Naive thymus-derived CD4-positive, alpha-beta T cell (primary cell): ENCODE measurements at regions of chr4 and their contacts with region 1.

Region 1: GRCh38 chr4:100093091-100093866 is 97.0 kb downstream of the DDIT4L start:
- DNase-seq: peak; percentile 42 to 96 (median 89)
- ATAC-seq: peak; percentile 99
- H3K4me3 ChIP-seq: no peak overlapping the region
- H3K4me3 Mint-ChIP-seq: peak overlapping the region in 4 of 10 donors; percentile 8 to 70 (median 48)
- H3K27ac ChIP-seq: peak overlapping the region; percentile 55
- H3K27ac Mint-ChIP-seq: peak overlapping the region; percentile 77 to 99 (median 95)
- H3K4me1 ChIP-seq: peaks cover 0 to 16% of the 10 kb centered on the region in 2 donors
- H3K4me1 Mint-ChIP-seq: peaks cover 9 to 48% (median 20%) of the 10 kb centered on the region in 7 donors
- H3K27me3 ChIP-seq: no peaks in the 10 kb centered on the region
- H3K27me3 Mint-ChIP-seq: no peaks in the 10 kb centered on the region

Region 2: GRCh38 chr4:98928505-98929340 is 1164.6 kb before region 1 on chr4 and contains the start of gene EIF4E:
- CTCF ChIA-PET with region 1: no interaction called
- POLR2A ChIA-PET with region 1: no interaction called
- intact Hi-C with region 1: loop called in 1 of 2 experiments (anchors 10 kb)
- DNase-seq: peak; percentile 81 to 99 (median 97)
- ATAC-seq: peak; percentile 88
- H3K4me3 ChIP-seq: peak within 1 kb of the TSS; percentile 96
- H3K4me3 Mint-ChIP-seq: peak within 1 kb of the TSS; percentile 91 to 100 (median 96)
- H3K27ac ChIP-seq: peak within 1 kb of the TSS; percentile 88
- H3K27ac Mint-ChIP-seq: peak within 1 kb of the TSS; percentile 88 to 98 (median 97)
- H3K4me1 ChIP-seq: peaks cover 9 to 15% of the 10 kb centered on the region in 2 donors
- H3K4me1 Mint-ChIP-seq: peaks cover 12 to 52% (median 38%) of the 10 kb centered on the region in 7 donors
- H3K27me3 ChIP-seq: no peaks in the 10 kb centered on the region
- H3K27me3 Mint-ChIP-seq: peaks cover 0 to 4% (median 0%) of the 10 kb centered on the region in 5 donors
- total RNA-seq, gene EIF4E: 53.6 to 96.1 (median 63.0) TPM

Region 3: GRCh38 chr4:99894161-99894997 is 198.9 kb before region 1 on chr4 and contains the start of gene LAMTOR3:
- CTCF ChIA-PET with region 1: no interaction called
- POLR2A ChIA-PET with region 1: no interaction called
- intact Hi-C with region 1: loop called in 1 of 2 experiments (anchors 10 kb)
- DNase-seq: peak; percentile 70 to 92 (median 89)
- ATAC-seq: peak; percentile 98
- H3K4me3 ChIP-seq: peak within 1 kb of the TSS; percentile 92
- H3K4me3 Mint-ChIP-seq: peak within 1 kb of the TSS; percentile 96 to 99 (median 98)
- H3K27ac ChIP-seq: peak within 1 kb of the TSS; percentile 96
- H3K27ac Mint-ChIP-seq: peak within 1 kb of the TSS; percentile 96 to 99 (median 98)
- H3K4me1 ChIP-seq: peaks cover 13 to 25% of the 10 kb centered on the region in 2 donors
- H3K4me1 Mint-ChIP-seq: peaks cover 25 to 55% (median 52%) of the 10 kb centered on the region in 7 donors
- H3K27me3 ChIP-seq: no peaks in the 10 kb centered on the region
- H3K27me3 Mint-ChIP-seq: no peaks in the 10 kb centered on the region
- total RNA-seq, gene LAMTOR3: 20.1 to 32.6 (median 27.4) TPM

Region 4: DNA sequence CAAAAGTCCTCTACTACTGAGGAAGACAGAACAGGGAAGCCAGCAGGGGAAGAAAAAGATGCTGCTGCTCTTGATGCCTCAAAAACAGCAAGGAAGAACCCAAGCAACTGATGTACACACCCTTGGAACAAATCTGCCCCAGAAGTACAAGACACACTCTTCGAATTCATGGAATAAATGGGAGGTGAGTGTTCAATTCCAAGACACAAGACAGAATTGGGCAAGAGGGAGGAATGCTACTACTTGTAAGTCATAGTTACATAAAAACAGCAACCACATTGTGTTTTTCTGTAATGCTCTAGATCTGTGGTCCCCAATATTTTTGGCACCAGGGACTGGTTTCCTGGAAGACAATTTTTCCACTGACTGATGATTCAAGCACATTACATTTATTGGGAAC is 85.2 kb before region 1 on chr4:
- CTCF ChIA-PET with region 1: no interaction called
- POLR2A ChIA-PET with region 1: no interaction called
- intact Hi-C with region 1: no loop called
- DNase-seq: no peak
- ATAC-seq: no peak
- H3K4me3 ChIP-seq: no peak overlapping the region
- H3K4me3 Mint-ChIP-seq: no peak overlapping the region
- H3K27ac ChIP-seq: no peak overlapping the region
- H3K27ac Mint-ChIP-seq: no peak overlapping the region
- H3K4me1 ChIP-seq: no peaks in the 10 kb centered on the region
- H3K4me1 Mint-ChIP-seq: no peaks in the 10 kb centered on the region
- H3K27me3 ChIP-seq: no peaks in the 10 kb centered on the region
- H3K27me3 Mint-ChIP-seq: peaks cover 0 to 7% (median 5%) of the 10 kb centered on the region in 5 donors

Region 5: DNA sequence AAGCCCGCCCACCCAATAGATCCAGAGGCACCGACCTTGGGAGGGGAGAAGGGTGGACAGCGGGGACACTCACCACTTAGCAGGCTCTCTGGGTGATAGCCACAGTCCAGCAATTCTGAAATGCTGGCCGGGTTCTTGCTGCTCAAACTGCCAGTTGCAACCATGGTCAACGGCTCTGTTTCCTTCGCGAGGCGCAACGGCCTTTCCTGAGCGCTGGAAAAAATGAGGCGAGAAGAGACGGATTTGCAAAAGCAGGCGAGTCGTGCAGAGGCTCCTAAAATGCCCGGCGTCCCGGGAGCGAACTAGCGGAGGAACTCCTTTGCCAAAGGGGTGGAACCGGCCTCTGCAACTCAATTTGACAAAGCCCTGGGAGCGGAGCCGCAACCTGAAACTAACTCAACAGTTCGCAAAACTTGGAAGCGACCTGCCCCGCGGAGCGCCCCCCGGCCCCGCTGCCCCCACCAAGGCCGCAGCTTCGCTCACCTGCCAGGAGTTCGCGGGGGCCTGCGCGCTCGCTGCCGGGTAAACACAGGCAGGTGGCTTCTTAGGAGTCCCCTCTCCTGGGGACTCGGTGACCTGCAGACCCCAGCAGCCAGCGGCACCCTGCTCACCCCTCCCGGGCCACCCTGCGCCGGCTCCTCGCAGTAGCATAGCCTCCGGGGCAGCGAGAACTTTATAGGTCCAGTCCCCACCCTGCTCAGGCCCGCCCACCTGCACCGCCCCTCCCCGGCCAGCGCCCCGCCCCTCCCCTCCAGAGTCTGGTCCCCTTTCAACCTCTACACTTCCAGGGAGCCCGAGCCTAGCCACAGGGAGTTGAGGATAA is 96.8 kb after region 1 on chr4 and contains the start of gene DDIT4L:
- CTCF ChIA-PET with region 1: no interaction called
- POLR2A ChIA-PET with region 1: no interaction called
- intact Hi-C with region 1: loop called in 1 of 2 experiments (anchors 5 kb)
- DNase-seq: no peak
- ATAC-seq: peak; percentile 61
- H3K4me3 ChIP-seq: peak within 1 kb of the TSS; percentile 48
- H3K4me3 Mint-ChIP-seq: peak within 1 kb of the TSS; percentile 74 to 86 (median 82)
- H3K27ac ChIP-seq: no peak within 1 kb of the TSS
- H3K27ac Mint-ChIP-seq: peak within 1 kb of the TSS in 1 of 9 donors; percentile 17
- H3K4me1 ChIP-seq: no peaks in the 10 kb centered on the region
- H3K4me1 Mint-ChIP-seq: peaks cover 14 to 19% (median 16%) of the 10 kb centered on the region in 7 donors
- H3K27me3 ChIP-seq: peaks cover 0 to 10% of the 10 kb centered on the region in 2 donors
- H3K27me3 Mint-ChIP-seq: peaks cover 51 to 68% (median 58%) of the 10 kb centered on the region in 5 donors
- total RNA-seq, gene DDIT4L: 1.2 TPM in 1 of 5 experiments, not detected in the others

Region 6: GRCh38 chr4:100581332-100581731 is 488.1 kb after region 1 on chr4:
- CTCF ChIA-PET with region 1: no interaction called
- POLR2A ChIA-PET with region 1: no interaction called
- intact Hi-C with region 1: no loop called
- DNase-seq: no peak
- ATAC-seq: no peak
- H3K4me3 ChIP-seq: no peak overlapping the region
- H3K4me3 Mint-ChIP-seq: no peak overlapping the region
- H3K27ac ChIP-seq: no peak overlapping the region
- H3K27ac Mint-ChIP-seq: no peak overlapping the region
- H3K4me1 ChIP-seq: no peaks in the 10 kb centered on the region
- H3K4me1 Mint-ChIP-seq: peaks cover 0 to 1% (median 0%) of the 10 kb centered on the region in 7 donors
- H3K27me3 ChIP-seq: no peaks in the 10 kb centered on the region
- H3K27me3 Mint-ChIP-seq: peaks cover 0 to 11% (median 6%) of the 10 kb centered on the region in 5 donors

Region 7: DNA sequence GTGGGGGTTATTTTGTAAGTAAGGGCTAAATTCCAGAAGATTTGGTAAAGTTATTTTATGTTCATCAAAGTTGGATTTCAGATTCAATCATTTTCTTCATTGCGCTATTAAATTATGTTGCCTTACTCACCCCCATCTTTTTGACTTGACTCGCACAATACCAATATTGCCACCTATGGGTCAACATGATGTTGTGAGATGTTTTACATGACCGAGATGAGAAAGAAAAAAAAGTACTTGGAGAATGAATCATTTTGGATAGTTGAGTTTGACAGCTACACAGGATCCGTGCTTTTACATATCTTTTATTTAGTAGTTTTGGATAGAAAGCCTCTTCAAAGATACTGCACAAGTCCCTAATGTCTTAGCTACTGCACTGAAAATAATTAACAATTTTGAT is 648.8 kb after region 1 on chr4:
- CTCF ChIA-PET with region 1: no interaction called
- POLR2A ChIA-PET with region 1: no interaction called
- intact Hi-C with region 1: loop called in 1 of 2 experiments (anchors 1 kb)
- DNase-seq: peak in 3 of 9 donors; percentile 2 to 4 (median 3)
- ATAC-seq: no peak
- H3K4me3 ChIP-seq: no peak overlapping the region
- H3K4me3 Mint-ChIP-seq: no peak overlapping the region
- H3K27ac ChIP-seq: no peak overlapping the region
- H3K27ac Mint-ChIP-seq: no peak overlapping the region
- H3K4me1 ChIP-seq: no peaks in the 10 kb centered on the region
- H3K4me1 Mint-ChIP-seq: peaks cover 0 to 1% (median 0%) of the 10 kb centered on the region in 7 donors
- H3K27me3 ChIP-seq: no peaks in the 10 kb centered on the region
- H3K27me3 Mint-ChIP-seq: peaks cover 0 to 7% (median 5%) of the 10 kb centered on the region in 5 donors

Region 8: DNA sequence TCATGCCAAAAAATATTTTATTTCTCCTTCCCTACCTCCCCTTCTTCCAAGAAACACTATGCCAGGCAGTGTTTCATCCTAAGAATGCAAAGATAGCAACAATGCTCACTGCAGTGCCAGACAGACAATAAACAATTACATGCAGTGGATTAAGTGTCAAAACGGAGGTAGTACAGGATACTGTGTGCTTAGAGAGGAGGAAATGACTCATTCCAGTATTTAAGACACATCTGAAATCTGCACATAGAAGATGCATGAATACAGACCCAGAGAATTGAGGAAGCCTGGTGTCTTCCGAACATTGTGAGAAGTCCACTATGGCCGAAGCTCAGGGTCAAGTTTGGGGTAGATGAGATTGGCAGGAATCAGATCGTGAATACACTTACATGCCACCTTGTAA is 927.7 kb after region 1 on chr4:
- CTCF ChIA-PET with region 1: interaction called, 3 read pairs
- POLR2A ChIA-PET with region 1: no interaction called
- intact Hi-C with region 1: loop called (anchors 5 kb)
- DNase-seq: peak in 3 of 9 donors; percentile 3 to 10 (median 10)
- ATAC-seq: peak; percentile 82
- H3K4me3 ChIP-seq: peak overlapping the region; percentile 21
- H3K4me3 Mint-ChIP-seq: peak overlapping the region in 4 of 10 donors; percentile 3 to 76 (median 46)
- H3K27ac ChIP-seq: no peak overlapping the region
- H3K27ac Mint-ChIP-seq: peak overlapping the region; percentile 8 to 90 (median 59)
- H3K4me1 ChIP-seq: peaks cover 0 to 48% of the 10 kb centered on the region in 2 donors
- H3K4me1 Mint-ChIP-seq: peaks cover 21 to 55% (median 34%) of the 10 kb centered on the region in 7 donors
- H3K27me3 ChIP-seq: no peaks in the 10 kb centered on the region
- H3K27me3 Mint-ChIP-seq: no peaks in the 10 kb centered on the region

Region 9: DNA sequence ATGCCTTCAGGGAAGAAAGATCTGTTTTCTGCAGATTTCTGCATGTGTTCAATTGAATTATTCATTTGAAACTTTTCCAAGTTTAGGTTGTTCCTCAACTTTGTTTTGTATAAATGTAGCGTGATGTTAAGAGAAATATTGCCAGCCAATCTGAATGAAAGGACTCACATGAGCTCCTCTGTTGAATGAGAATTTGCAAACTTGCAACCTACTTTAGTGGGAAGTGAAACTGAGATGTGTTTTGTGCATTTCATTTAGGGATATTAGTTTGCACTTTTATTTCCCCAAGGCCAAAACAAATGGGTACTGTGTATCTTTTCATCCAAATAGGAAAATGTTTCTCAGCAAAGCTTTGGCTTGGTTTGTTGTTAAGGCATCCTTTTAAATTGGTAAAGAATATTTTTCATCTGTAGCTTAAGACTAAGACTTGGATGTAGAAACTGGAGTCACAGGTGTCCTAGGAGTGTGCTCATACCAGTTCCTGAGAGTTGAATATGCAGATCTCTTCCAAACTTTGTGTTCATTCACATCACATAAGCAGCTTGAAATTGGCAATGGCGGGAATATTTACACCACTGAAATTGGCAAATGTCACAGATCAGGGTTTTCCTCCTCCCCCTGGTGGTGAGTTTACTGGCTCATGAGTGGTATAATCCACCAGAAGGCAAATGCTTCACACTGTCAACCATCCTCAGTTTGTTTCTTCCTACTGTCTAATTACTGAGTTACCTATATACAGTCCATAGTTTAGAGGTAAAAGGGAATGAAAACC is 1503.7 kb after region 1 on chr4:
- CTCF ChIA-PET with region 1: interaction called, 3 read pairs
- POLR2A ChIA-PET with region 1: no interaction called
- intact Hi-C with region 1: loop called (anchors 1 to 10 kb)
- DNase-seq: peak in 6 of 9 donors; percentile 2 to 33 (median 25)
- ATAC-seq: peak; percentile 32
- H3K4me3 ChIP-seq: no peak overlapping the region
- H3K4me3 Mint-ChIP-seq: no peak overlapping the region
- H3K27ac ChIP-seq: no peak overlapping the region
- H3K27ac Mint-ChIP-seq: no peak overlapping the region
- H3K4me1 ChIP-seq: no peaks in the 10 kb centered on the region
- H3K4me1 Mint-ChIP-seq: no peaks in the 10 kb centered on the region
- H3K27me3 ChIP-seq: no peaks in the 10 kb centered on the region
- H3K27me3 Mint-ChIP-seq: peaks cover 0 to 3% (median 0%) of the 10 kb centered on the region in 5 donors